Mammary epithelial cell (primary cell): ENCODE measurements at regions of chr7 and their contacts with region 1.

Region 1: DNA sequence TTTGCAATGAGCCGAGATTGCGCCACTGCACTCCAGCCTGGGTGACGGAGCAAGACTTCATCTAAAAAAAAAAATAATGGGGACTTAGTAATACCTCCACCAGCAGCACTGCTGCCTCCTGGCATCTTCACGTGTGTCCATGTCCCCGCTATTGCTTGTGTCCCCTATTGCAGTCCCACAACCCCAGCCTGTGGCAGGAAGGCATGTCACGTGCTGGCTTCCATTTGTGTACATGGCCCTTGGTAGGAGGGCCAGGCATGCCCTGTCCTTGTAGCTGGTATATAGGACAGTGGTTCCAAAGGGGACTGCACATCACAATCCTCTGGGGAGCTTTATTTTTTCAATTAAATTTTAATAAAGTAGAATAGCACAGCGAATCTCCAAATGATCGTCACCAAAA is 5.7 kb downstream of the ZNF783 start:
- DNase-seq: no peak
- H3K4me3 ChIP-seq: no peak overlapping the region
- H3K27ac ChIP-seq: no peak overlapping the region
- H3K4me1 ChIP-seq: peaks cover 1% of the 10 kb centered on the region
- H3K27me3 ChIP-seq: no peaks in the 10 kb centered on the region
- CTCF ChIP-seq: no peak

Region 2: DNA sequence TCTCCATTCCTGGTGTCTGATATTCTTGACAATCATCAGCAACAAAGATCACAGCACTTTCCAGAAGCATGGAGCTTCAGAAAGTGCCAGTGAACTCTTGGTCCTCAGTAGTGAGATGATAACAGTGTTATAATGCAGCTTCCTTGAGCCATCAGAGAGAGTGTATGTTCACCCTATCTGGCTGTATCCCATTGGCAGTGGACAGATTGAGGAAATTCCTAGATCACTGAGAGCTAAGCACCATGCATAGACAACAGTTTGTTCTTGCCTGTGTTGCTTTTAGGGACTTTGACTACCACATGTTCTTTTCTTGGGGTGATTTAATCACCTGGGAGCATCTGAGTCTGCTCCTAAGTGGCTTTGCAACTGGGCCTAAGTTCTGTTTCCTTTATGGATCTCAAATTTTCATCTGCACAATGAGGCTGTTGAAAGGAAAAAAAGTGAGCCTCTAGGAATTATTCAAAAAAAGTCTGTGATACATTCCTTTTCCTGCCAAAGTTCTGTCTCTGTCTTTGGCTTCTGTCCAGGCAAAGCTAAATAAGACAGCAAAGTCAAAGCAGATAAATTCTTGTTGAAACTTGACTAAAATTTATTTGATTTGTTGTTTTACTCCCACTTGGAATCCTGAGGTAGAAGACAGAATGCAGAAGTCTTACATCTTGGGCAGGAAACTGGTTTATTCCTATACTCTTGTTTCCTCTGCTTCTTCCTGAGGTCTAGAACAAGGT is 86.8 kb before region 1 on chr7:
- CTCF ChIA-PET with region 1: interaction called, 38 read pairs
- dilution Hi-C with region 1: no loop called
- in situ Hi-C with region 1: no loop called
- intact Hi-C with region 1: no loop called
- DNase-seq: peak; percentile 51
- H3K4me3 ChIP-seq: no peak overlapping the region
- H3K27ac ChIP-seq: peak overlapping the region; percentile 32
- H3K4me1 ChIP-seq: peaks cover 24% of the 10 kb centered on the region
- H3K27me3 ChIP-seq: no peaks in the 10 kb centered on the region
- CTCF ChIP-seq: no peak